Activated CD4-positive, alpha-beta T cell treated with anti-CD3 and anti-CD28 coated beads, Interleukin-2, amount 10 ng/mL, durations not matched to agents 7 days and 5 days (primary cell): ENCODE measurements at regions of chr12 and their contacts with region 1.

Region 1: DNA sequence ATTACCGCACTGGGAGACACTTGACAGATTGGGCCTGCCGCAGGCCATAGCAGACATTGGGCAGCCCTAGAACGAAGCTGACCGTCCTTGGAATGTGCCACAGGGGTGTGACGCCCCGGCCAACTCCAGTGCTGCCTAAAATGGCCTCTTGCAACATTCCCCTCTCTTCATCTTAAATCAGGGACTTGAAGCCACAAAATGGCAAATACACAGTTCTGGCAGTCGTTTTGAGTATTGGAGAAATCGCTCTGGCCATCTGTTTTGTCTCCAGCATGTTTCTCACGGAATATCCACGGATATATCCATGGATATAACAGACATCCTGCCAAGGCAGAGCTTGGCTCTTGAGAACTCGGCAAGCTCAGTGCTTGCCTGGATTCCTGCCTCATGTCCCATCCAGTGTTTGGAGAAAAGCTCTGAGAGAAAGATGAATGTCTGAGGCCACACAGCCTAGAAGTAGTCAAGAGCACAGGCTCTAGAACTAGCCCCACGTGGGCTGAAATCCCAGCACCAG is 158.4 kb downstream of the CHST11 start:
- DNase-seq: no peak
- H3K4me3 Mint-ChIP-seq: no peak overlapping the region
- H3K27ac Mint-ChIP-seq: no peak overlapping the region
- H3K4me1 Mint-ChIP-seq: peaks cover 11% of the 10 kb centered on the region
- H3K27me3 Mint-ChIP-seq: no peaks in the 10 kb centered on the region

Region 2: GRCh38 chr12:104578453-104578852 is 36.7 kb before region 1 on chr12:
- CTCF ChIA-PET with region 1: no interaction called
- POLR2A ChIA-PET with region 1: no interaction called
- DNase-seq: no peak
- H3K4me3 Mint-ChIP-seq: no peak overlapping the region
- H3K27ac Mint-ChIP-seq: no peak overlapping the region
- H3K4me1 Mint-ChIP-seq: peaks cover 78% of the 10 kb centered on the region
- H3K27me3 Mint-ChIP-seq: no peaks in the 10 kb centered on the region

Region 3: DNA sequence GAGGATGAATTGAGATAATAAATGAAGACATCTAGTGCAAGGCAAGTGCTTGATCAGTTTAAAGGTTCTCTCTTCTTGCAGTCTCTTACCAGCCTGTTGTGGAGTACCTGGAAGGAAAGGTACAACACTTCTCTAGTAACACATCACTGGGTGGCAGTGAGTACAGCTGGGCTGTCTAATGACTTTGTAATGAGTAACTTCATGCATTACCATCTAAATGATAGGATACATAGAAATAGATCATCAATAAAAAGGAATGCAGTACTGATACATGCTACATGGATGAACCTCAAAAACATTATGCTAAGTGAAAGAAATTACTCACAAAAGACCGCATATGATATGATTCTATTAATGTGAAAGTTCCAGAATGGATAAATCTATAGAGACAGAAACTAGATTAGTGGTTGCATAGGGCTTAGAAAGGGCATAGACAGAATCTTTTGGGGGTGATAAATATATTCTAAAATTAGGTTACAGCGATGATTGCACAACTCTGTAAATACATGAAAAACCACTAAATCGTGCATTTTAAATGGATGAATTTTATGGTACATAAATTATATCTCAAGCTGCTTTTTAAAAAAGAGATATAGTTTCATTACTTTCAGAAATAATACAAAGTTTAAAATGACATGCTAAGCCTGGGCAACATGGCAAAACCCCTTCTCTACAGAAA is 66.0 kb after region 1 on chr12:
- CTCF ChIA-PET with region 1: no interaction called
- POLR2A ChIA-PET with region 1: interaction called, 12 read pairs
- DNase-seq: no peak
- H3K4me3 Mint-ChIP-seq: no peak overlapping the region
- H3K27ac Mint-ChIP-seq: peak overlapping the region; percentile 47
- H3K4me1 Mint-ChIP-seq: peaks cover 74% of the 10 kb centered on the region
- H3K27me3 Mint-ChIP-seq: no peaks in the 10 kb centered on the region